ENCODE measurements at regions of chr19 and their contacts with region 1.

Region 1: GRCh38 chr19:41310033-41310758 is at the start of gene CCDC97:
- DNase-seq: peak in 1 of 2 donors; percentile 89
- H3K4me3 ChIP-seq: peak within 1 kb of the TSS; percentile 55 to 86
- H3K27ac ChIP-seq: peak within 1 kb of the TSS; percentile 93 to 96
- H3K4me1 ChIP-seq: peaks cover 8 to 19% of the 10 kb centered on the region in 2 donors
- H3K27me3 ChIP-seq: no peaks in the 10 kb centered on the region
- CTCF ChIP-seq: no peak
- total RNA-seq, gene CCDC97: 18.4 TPM

Region 2: DNA sequence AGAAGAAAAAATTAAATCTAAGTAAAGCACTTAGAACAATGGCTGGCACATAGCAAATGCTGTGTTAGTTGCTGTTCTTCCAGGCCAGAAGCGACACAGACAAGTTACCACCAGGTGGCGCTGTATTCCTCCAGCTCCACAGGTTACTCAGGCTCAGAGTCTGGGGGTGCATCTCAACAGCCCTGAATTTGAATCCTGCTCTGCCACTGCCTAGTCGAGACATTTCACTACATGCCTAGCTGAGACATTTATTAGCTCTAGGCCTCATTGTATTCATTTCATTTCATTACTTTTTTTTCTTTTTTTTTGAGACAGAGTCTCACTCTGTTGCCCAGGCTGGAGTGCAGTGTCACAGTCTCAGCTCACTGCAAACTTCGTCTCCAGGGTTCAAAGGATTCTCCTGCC is 335.6 kb before region 1 on chr19:
- intact Hi-C with region 1: loop called (anchors 10 kb)
- DNase-seq: peak in 1 of 2 donors; percentile 73
- H3K4me3 ChIP-seq: no peak overlapping the region
- H3K27ac ChIP-seq: no peak overlapping the region
- H3K4me1 ChIP-seq: no peaks in the 10 kb centered on the region
- H3K27me3 ChIP-seq: no peaks in the 10 kb centered on the region
- CTCF ChIP-seq: peak; percentile 23 to 72 (median 62)

Region 3: GRCh38 chr19:41206926-41207750 is 103.1 kb before region 1 on chr19:
- intact Hi-C with region 1: loop called (anchors 2 kb)
- DNase-seq: peak in 1 of 2 donors; percentile 86
- H3K4me3 ChIP-seq: peak overlapping the region in 1 of 2 donors; percentile 35
- H3K27ac ChIP-seq: peak overlapping the region; percentile 66 to 70
- H3K4me1 ChIP-seq: no peaks in the 10 kb centered on the region
- H3K27me3 ChIP-seq: no peaks in the 10 kb centered on the region
- CTCF ChIP-seq: no peak

Region 4: DNA sequence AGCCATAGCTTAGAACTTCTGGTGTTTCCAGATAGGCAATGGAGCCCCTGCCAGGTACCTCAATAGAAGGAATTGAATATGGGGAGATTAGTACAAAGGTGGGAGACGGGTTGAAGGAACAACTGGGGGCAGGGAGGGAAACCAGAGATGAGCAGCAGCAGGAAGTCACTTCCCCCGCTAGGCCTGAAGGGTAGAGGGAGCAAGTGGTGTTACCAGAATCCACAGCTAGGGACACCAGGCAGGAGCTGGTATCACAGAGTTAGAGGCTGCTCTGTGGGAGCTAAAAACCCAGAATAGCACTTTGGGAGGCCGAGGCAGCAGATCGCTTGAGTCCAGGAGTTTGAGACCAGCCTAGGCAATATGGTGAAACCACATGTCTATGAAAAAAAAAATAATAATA is 61.3 kb before region 1 on chr19:
- intact Hi-C with region 1: no loop called
- DNase-seq: no peak
- H3K4me3 ChIP-seq: no peak overlapping the region
- H3K27ac ChIP-seq: no peak overlapping the region
- H3K4me1 ChIP-seq: no peaks in the 10 kb centered on the region
- H3K27me3 ChIP-seq: no peaks in the 10 kb centered on the region
- CTCF ChIP-seq: no peak

Region 5: DNA sequence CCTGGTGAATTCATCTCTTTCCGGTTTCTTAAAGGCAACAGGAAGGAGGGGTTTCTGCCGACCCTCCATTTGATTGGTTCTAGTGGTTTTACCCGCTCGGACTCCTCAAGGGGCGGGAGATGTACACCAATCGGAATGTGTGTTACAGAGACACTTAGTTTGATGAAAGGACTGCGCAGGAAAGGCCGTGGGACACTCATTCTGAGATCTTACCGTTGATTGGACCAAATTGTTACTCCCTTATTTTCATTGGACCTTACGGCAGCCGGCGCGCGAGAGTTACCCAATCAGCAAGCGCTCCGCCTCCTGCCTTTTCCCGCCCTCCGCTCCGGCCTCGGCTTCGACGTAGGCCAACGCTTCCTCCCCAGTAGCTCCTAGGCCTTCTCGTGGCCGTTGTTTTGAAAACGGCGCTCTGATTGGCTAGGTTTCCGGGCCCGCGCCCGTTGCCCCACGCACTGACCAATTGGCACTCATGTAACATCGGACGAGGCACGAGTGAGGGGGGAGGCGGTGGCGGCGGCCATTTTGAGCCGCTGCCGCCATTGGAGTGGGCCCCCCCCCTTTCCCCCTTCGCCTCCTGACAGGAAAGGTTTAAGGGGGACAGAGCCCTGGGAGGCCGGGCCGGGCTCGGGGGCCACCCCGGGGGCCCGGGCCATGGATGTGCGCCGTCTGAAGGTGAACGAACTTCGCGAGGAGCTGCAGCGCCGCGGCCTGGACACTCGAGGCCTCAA is 46.2 kb before region 1 on chr19 and contains the start of gene HNRNPUL1:
- intact Hi-C with region 1: loop called (anchors 1 kb)
- DNase-seq: peak; percentile 97 to 99
- H3K4me3 ChIP-seq: peak within 1 kb of the TSS; percentile 81 to 82
- H3K27ac ChIP-seq: peak within 1 kb of the TSS; percentile 94 to 98
- H3K4me1 ChIP-seq: peaks cover 9 to 22% of the 10 kb centered on the region in 2 donors
- H3K27me3 ChIP-seq: no peaks in the 10 kb centered on the region
- CTCF ChIP-seq: peak; percentile 25 to 44 (median 40)
- total RNA-seq, gene HNRNPUL1: 81.1 TPM

Region 6: GRCh38 chr19:41321600-41322270 is 11.5 kb after region 1 on chr19:
- intact Hi-C with region 1: loop called (anchors 1 kb)
- DNase-seq: no peak
- H3K4me3 ChIP-seq: no peak overlapping the region
- H3K27ac ChIP-seq: peak overlapping the region; percentile 85 to 97
- H3K4me1 ChIP-seq: peaks cover 35 to 52% of the 10 kb centered on the region in 2 donors
- H3K27me3 ChIP-seq: no peaks in the 10 kb centered on the region
- CTCF ChIP-seq: peak; percentile 61 to 70 (median 68)

Region 7: DNA sequence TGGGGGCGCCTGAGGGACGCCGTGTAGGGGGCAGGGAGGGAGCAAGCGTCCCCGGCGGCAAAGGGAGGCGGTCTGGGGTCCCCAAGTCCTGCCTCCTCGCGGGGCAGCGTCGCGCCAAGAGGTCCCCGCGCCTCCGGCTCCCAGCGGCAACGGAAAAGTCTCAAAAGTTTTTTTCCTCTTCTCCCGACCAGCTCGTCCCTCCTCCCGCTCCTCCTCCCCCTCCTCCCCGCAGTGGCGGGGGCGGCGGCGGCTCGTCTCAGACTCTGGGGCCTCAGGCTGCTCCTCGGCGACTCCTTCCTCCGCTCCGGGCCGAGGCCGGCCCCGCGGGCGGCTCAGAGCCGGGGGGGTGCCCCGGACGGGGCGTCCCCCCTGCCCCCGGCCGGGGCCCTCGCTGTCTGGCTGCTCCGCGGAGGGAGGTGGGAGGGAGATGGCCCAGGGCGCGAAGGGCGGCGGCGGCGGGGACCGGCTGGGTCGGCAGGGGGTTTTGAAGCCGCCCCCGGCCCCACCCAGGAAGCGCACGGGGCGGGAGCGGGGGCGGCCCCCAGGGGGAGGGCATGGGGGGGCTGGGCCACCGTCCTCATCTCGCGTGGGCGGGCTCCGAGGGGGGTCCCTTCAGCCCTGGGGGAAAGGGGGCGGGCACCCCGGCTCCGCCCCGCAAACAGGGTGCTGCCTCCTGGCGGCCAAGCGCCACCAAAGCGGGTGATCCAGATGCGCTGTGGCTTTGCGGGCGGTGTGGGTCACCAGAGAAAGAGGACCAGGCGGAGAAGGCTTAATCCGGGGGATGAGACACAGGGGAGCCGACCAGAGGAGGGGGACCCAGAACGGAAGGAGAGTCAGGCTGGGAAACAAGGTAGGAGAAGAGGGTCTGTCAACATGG is 43.5 kb after region 1 on chr19 and contains the start of gene TGFB1:
- intact Hi-C with region 1: loop called (anchors 2 kb)
- DNase-seq: peak; percentile 62 to 95
- H3K4me3 ChIP-seq: peak within 1 kb of the TSS; percentile 66 to 90
- H3K27ac ChIP-seq: peak within 1 kb of the TSS; percentile 88 to 93
- H3K4me1 ChIP-seq: peaks cover 0 to 6% of the 10 kb centered on the region in 2 donors
- H3K27me3 ChIP-seq: no peaks in the 10 kb centered on the region
- CTCF ChIP-seq: peak; percentile 84 to 95 (median 93)
- total RNA-seq, gene TGFB1: 103 TPM

Region 8: DNA sequence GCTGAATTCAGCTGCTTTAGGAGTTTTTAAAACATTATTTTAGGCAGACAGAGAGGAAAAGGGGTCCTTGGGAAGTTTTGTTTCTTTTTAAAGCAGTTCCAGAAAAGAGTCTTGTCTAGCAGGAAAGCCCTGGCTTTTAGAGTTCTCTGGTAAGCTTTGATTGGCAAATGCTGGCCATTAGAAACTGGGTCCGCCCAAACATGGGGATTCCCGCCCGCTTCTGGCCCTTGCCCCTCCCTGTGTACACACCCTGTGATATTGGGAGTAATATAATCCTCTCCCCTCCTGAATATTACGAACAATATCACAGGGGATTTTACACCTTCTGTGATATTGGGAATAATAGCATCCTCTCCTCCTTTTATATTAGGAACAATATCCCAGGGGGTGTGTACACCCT is 191.7 kb after region 1 on chr19:
- intact Hi-C with region 1: no loop called
- DNase-seq: no peak
- H3K4me3 ChIP-seq: no peak overlapping the region
- H3K27ac ChIP-seq: no peak overlapping the region
- H3K4me1 ChIP-seq: no peaks in the 10 kb centered on the region
- H3K27me3 ChIP-seq: no peaks in the 10 kb centered on the region
- CTCF ChIP-seq: no peak

Measured in ascending aorta (tissue), 2 donors.